Prostate gland (tissue), 2 donors: ENCODE measurements at regions of chr21 and their contacts with region 1.

Region 1: GRCh38 chr21:46184625-46185555 is 631 bp upstream of the SPATC1L start:
- DNase-seq: peak; percentile 80
- H3K4me3 ChIP-seq: peak overlapping the region; percentile 28 to 62
- H3K27ac ChIP-seq: peak overlapping the region; percentile 96 to 99
- H3K4me1 ChIP-seq: peaks cover 16% of the 10 kb centered on the region
- H3K27me3 ChIP-seq: no peaks in the 10 kb centered on the region
- CTCF ChIP-seq: peak in 1 of 4 experiments; percentile 1
- POLR2A ChIP-seq: no peak

Region 2: DNA sequence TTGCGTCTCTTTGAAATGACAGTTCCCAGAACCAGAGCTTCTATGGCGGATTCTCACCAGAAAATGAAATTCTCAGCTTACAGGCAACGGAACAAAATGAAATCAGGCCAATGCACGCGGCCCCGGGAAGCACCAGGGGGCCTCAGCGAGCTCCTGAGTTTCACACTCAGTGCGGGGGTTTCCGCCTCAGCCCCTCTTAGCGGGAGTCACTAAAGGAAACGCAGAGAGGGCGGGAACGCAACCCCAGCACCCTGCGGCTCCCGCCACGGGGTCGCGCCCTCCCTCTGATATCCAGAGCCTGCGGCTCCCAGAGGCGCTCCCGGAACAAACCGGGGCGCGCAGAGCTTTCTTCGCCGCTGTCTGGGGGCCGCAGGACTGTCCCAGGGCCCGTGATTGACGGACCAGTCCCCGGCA is 211.2 kb before region 1 on chr21:
- intact Hi-C with region 1: loop called (anchors 5 kb)
- DNase-seq: peak; percentile 43
- H3K4me3 ChIP-seq: peak overlapping the region; percentile 29 to 43
- H3K27ac ChIP-seq: peak overlapping the region; percentile 79 to 82
- H3K4me1 ChIP-seq: peaks cover 9% of the 10 kb centered on the region
- H3K27me3 ChIP-seq: no peaks in the 10 kb centered on the region
- CTCF ChIP-seq: peak in 3 of 4 experiments; percentile 19 to 60 (median 57)
- POLR2A ChIP-seq: no peak

Region 3: GRCh38 chr21:46097336-46098293 is 87.3 kb before region 1 on chr21 and contains the start of gene COL6A2:
- intact Hi-C with region 1: no loop called
- DNase-seq: peak; percentile 25
- H3K4me3 ChIP-seq: peak within 1 kb of the TSS; percentile 75 to 86
- H3K27ac ChIP-seq: peak within 1 kb of the TSS; percentile 88 to 91
- H3K4me1 ChIP-seq: no peaks in the 10 kb centered on the region
- H3K27me3 ChIP-seq: no peaks in the 10 kb centered on the region
- CTCF ChIP-seq: peak in 2 of 4 experiments; percentile 22 to 36
- POLR2A ChIP-seq: peak; percentile 12
- total RNA-seq, gene COL6A2: 198 to 474 TPM

Region 4: GRCh38 chr21:46144464-46145070 is 40.3 kb before region 1 on chr21:
- intact Hi-C with region 1: loop called (anchors 5 kb)
- DNase-seq: no peak
- H3K4me3 ChIP-seq: no peak overlapping the region
- H3K27ac ChIP-seq: peak overlapping the region in 1 of 2 donors; percentile 69
- H3K4me1 ChIP-seq: no peaks in the 10 kb centered on the region
- H3K27me3 ChIP-seq: no peaks in the 10 kb centered on the region
- CTCF ChIP-seq: no peak
- POLR2A ChIP-seq: no peak

Region 5: GRCh38 chr21:46228345-46229051 is 43.6 kb after region 1 on chr21 and contains the start of gene LSS:
- intact Hi-C with region 1: loop called (anchors 2 kb)
- DNase-seq: peak; percentile 98
- H3K4me3 ChIP-seq: peak within 1 kb of the TSS; percentile 99
- H3K27ac ChIP-seq: peak within 1 kb of the TSS; percentile 97 to 98
- H3K4me1 ChIP-seq: peaks cover 5% of the 10 kb centered on the region
- H3K27me3 ChIP-seq: no peaks in the 10 kb centered on the region
- CTCF ChIP-seq: no peak
- POLR2A ChIP-seq: peak; percentile 73
- total RNA-seq, gene LSS: 95.5 to 145 TPM